ENCODE measurements at regions of chr20 and their contacts with region 1.

Region 1: GRCh38 chr20:44733341-44734069 is 12.2 kb upstream of the KCNK15 start:
- DNase-seq: peak; percentile 65
- ATAC-seq: peak; percentile 73
- H3K4me3 ChIP-seq: no peak overlapping the region
- H3K27ac ChIP-seq: no peak overlapping the region
- H3K4me1 ChIP-seq: peaks cover 17% of the 10 kb centered on the region
- H3K27me3 ChIP-seq: no peaks in the 10 kb centered on the region
- CTCF ChIP-seq: peak; percentile 97
- POLR2A ChIP-seq: 0 out of 2 replicates have a peak, but pooled peaks have one; percentile 53
- RAD21 ChIP-seq: peak; percentile 99

Region 2: DNA sequence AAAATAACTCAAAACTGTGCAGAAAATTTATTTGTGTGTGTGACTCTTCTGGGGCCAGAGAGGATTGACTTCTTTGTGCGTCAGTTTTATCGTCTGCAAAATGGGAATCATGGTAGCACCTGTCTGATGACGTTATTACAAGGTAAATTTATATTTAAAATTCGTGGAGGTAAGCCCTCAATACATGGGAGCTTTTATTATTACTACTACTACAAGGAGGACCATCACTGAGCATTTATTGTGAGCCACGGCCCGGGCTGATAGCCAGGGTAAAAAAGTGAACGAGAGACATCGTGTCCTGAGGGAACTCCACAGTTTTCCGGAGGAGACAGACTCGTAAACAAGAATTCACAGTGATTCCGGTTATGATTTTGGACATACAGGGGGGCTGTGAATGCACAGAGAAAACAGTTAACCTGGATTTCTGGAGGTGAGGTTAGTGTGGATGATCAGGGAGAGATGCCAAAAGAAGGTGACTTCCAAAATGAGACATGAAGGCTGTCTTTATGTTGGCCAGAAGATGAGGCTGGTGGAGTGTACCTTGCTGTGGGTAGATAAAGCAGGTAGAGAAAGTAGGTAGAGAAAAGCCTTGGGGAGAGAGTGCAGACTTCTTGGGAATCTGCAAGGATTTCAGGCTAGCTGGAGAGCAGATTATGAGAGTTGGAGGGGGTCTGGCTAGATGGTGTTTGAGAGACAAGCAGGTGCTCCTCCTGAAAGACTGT is 201.1 kb before region 1 on chr20:
- CTCF ChIA-PET with region 1: no interaction called
- POLR2A ChIA-PET with region 1: no interaction called
- dilution Hi-C with region 1: no loop called
- in situ Hi-C with region 1: no loop called
- intact Hi-C with region 1: loop called (anchors 5 kb)
- DNase-seq: no peak
- ATAC-seq: no peak
- H3K4me3 ChIP-seq: peak overlapping the region; percentile 45
- H3K27ac ChIP-seq: peak overlapping the region; percentile 54; the same call in 1 of the 2 replicates
- H3K4me1 ChIP-seq: peaks cover 3% of the 10 kb centered on the region
- H3K27me3 ChIP-seq: no peaks in the 10 kb centered on the region
- CTCF ChIP-seq: no peak
- POLR2A ChIP-seq: no peak
- RAD21 ChIP-seq: no peak

Region 3: GRCh38 chr20:44683263-44684046 is 50.0 kb before region 1 on chr20:
- CTCF ChIA-PET with region 1: interaction called, 31 read pairs
- POLR2A ChIA-PET with region 1: interaction called, 19 read pairs
- dilution Hi-C with region 1: no loop called
- in situ Hi-C with region 1: loop called (anchors 5 kb)
- intact Hi-C with region 1: loop called (anchors 1 kb)
- DNase-seq: peak; percentile 42
- ATAC-seq: peak; percentile 69
- H3K4me3 ChIP-seq: no peak overlapping the region
- H3K27ac ChIP-seq: no peak overlapping the region
- H3K4me1 ChIP-seq: peaks cover under 1% of the 10 kb centered on the region; the same call in 1 of the 2 replicates
- H3K27me3 ChIP-seq: peaks cover 9% of the 10 kb centered on the region
- CTCF ChIP-seq: peak; percentile 65
- POLR2A ChIP-seq: no peak
- RAD21 ChIP-seq: peak; percentile 64